AG04450 (cell line): ENCODE measurements at regions of chr14 and their contacts with region 1.

Region 1: DNA sequence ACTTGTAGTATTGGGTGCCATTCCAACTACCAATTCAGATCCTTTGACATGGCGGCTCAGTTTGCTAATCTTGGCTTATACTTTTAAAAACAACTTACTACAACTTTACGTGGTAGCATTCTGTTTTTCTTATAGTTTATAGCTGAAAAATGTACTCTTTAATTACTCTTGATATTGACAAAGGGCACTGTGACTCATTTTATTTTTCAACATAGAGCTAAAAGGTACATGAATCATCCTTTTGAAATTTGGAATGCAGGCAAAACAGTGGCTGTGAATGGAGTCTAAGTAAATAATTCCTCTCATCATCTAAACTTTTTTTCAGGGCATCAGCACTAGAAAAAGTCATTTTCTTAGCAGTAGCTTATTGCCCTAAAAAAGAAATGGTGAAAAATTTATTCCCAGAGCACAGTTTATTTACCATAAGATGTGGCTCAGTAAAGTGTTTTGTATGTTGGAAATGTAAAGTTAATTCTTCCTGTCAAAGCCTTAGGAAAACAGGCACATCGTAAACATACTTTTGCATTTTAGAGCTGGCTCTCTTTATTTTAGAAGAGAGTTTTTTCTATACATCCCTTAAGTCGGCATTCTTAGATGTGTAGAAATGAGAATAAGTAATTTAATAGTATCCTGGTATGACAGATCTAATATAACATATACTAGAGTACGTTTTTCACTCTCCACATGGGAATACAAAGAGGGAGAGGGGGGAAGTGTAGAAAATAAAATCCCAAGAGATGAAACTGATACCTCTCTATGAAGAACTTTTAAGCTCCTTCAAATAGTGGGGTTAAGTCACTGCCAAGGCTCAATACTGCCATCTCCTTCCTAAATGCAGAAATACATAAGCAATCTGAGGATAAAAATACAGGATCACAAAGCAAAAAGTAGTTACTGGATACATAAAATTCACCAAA is 55.2 kb downstream of the SLC25A21 start:
- DNase-seq: peak; percentile 8
- H3K4me3 ChIP-seq: no peak overlapping the region
- H3K27ac ChIP-seq: no peak overlapping the region
- H3K27me3 ChIP-seq: no peaks in the 10 kb centered on the region
- CTCF ChIP-seq: peak; percentile 70

Region 2: DNA sequence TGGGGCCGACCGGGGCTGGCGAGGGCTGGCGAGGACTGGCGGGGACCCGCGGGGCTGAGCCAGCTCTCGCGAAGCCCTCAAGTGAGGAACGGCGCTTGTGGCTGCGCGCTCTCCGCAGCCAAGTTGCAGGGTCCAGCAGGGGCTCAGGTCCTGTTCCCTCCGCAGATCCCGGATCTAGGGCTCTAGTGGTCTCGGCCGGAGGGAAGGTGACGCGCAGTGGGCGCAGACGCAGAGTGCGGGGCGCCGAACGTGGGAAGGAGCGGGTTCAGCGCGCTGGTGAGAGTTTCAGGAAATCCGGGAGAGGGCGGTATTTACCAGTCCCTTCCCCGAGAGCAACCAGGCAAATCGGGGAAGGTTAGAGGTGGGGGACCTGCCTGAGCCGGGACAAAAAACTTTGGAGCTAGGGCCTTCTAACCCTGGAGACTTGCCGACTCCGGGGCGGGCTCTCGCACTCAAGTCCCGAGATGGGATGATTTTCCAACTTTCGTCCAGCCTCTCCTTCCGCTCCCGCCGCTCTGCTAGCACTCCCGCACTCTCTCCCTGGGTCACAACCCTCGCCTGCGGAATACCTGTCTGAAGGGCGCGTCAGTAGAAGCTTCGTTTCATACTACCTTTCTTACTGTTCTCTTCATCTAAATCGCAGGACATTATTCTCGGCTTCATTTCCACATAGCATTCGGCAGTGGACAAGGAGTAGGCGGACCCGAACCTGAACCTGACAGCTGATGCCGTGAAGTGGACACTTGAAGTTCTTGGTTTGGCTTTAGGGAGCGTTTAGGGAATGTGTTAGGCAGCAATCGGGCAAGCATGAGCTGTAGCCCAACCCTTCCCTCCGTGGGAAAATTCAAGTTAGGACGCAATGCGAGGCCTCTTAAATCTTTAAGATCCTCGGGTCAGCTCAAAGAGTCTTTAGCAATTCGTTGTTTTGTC is 469.1 kb before region 1 on chr14:
- CTCF ChIA-PET with region 1: interaction called, 27 read pairs
- POLR2A ChIA-PET with region 1: no interaction called
- DNase-seq: no peak
- H3K4me3 ChIP-seq: peak overlapping the region; percentile 43
- H3K27ac ChIP-seq: no peak overlapping the region
- H3K27me3 ChIP-seq: peaks cover 53% of the 10 kb centered on the region
- CTCF ChIP-seq: peak; percentile 56